Calu3 (cell line): ENCODE measurements at regions of chr4 and their contacts with region 1.

Region 1: GRCh38 chr4:113893546-113893945 is 85.9 kb downstream of the ARSJ start:
- DNase-seq: no peak
- H3K4me3 Mint-ChIP-seq: no peak overlapping the region
- H3K27ac Mint-ChIP-seq: no peak overlapping the region
- H3K4me1 Mint-ChIP-seq: no peaks in the 10 kb centered on the region
- H3K27me3 Mint-ChIP-seq: no peaks in the 10 kb centered on the region
- CTCF ChIP-seq: no peak

Region 2: DNA sequence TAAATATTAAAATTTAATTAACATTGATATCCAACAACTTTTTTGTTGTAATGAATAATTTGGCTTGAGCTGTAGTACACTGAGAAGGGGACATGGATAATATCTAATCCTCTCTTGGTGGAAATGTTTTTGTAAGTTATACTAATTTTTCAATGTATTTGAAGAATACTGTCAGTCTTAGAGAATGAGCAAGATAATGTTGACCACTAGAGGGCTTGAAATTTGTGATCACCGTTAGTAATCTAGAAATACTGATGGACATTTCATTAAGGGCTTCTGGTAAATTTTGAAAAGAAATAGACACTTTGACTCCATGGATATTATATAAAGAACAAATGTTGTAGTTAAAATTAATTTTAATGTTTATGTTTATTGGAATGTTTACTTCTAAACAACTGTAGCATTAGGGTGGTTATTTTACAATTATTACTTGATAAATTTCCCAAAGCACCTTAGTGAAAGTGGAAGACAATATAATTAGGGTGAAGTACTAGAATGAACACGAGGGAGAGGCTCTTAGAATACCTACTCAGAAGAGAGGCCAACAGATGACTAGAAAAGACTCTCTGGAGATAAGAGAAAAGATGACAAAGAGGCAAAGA is 112.0 kb before region 1 on chr4:
- CTCF ChIA-PET with region 1: no interaction called
- intact Hi-C with region 1: loop called (anchors 5 kb)
- DNase-seq: no peak
- H3K4me3 Mint-ChIP-seq: no peak overlapping the region
- H3K27ac Mint-ChIP-seq: no peak overlapping the region
- H3K4me1 Mint-ChIP-seq: peaks cover 23% of the 10 kb centered on the region
- H3K27me3 Mint-ChIP-seq: no peaks in the 10 kb centered on the region
- CTCF ChIP-seq: peak; percentile 48

Region 3: GRCh38 chr4:114250439-114250891 is 356.9 kb after region 1 on chr4:
- CTCF ChIA-PET with region 1: no interaction called
- intact Hi-C with region 1: no loop called
- DNase-seq: no peak
- H3K4me3 Mint-ChIP-seq: no peak overlapping the region
- H3K27ac Mint-ChIP-seq: peak overlapping the region; percentile 47
- H3K4me1 Mint-ChIP-seq: peaks cover 19% of the 10 kb centered on the region
- H3K27me3 Mint-ChIP-seq: no peaks in the 10 kb centered on the region
- CTCF ChIP-seq: no peak